Left ventricle myocardium superior (tissue), 1 donor: ENCODE measurements at regions of chr1 and their contacts with region 1.

Region 1: GRCh38 chr1:183101841-183102276 is 78.6 kb downstream of the LAMC1 start:
- DNase-seq: peak; percentile 43
- ATAC-seq: peak; percentile 51

Region 2: DNA sequence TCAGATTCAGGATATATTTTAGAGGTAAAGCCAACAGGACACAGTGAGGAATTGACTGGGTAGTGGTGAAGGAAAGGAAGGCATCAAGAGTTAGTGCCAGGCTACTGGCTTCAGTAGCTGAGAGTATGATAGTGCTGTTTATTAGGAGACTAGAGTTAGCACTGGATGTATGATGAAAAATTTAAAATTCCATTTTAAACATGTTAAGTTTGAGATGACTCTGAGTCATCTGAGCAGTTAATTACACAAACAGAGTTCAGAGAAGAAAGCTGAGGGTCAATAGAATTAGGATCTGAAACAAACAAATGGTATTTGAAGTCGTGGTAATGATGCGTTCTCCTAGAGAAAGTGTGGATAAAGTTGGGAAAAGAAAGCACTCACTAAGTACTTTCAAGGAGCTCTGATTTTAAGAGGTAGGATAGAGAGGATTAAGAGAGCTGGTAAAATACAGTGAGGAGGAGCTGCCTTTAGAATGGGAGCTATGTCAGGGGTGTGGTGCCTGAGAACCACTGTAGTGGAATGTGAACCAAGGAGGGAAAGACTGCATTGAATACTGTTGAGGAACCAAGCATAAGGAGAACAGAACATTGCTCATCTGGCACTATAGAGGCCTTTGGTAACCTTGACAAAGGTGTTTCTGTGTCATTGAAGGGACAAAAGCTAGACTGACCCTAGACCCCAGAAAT is 127.2 kb before region 1 on chr1:
- intact Hi-C with region 1: loop called (anchors 10 kb)
- DNase-seq: no peak
- ATAC-seq: no peak

Region 3: GRCh38 chr1:183003203-183003602 is 98.7 kb before region 1 on chr1:
- intact Hi-C with region 1: no loop called
- DNase-seq: peak; percentile 34
- ATAC-seq: peak; percentile 93

Region 4: GRCh38 chr1:183023601-183024316 is 78.1 kb before region 1 on chr1:
- intact Hi-C with region 1: loop called (anchors 10 kb)
- DNase-seq: peak; percentile 76
- ATAC-seq: peak; percentile 39